ENCODE measurements at regions of chr5 and their contacts with region 1.

Region 1: DNA sequence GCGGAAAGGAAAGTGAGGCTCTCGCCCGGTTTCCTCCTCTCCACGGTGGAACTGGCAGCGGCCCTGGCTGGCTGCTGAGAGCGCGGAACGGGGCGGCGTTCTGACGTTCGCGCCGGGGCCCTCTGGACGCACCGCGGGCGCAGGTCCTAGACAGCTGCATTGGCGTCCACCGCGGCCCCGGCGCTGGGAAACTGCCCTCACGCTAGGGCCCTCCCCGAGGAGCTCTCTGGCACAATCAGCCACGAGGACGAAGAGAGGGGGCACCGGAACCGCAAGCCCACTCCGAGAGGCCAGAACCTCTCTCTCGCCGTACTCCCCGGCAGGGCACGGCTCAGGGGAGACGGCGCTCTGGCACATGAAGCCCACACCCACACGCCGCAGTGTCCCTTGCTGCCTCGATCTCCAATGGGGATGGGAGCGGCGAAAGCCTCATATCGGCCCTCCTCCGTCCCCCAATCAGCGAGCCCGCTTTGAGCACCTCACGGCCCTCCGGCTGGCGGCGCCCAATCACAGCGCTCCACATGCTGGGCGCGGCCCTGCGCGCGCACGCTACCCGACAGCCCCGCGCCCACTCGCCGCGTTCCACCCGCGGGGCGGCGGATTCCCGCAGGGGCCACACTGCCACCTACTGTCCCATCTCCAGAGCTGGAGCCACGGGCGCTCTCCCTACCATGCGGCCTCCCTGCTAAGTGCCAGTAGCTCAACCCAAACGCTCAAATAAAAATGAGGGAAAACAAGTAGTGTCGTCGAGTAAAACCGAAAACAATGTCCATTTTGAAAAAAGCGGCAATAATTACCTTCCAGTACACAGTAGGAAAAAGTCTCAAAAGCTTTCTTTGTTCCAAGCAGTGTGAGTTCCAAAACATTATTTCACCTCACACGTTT is 11.8 kb downstream of the MRPS27 start:
- DNase-seq: peak; percentile 96
- ATAC-seq: peak; percentile 98
- H3K4me3 Mint-ChIP-seq: peak overlapping the region; percentile 88
- H3K27ac Mint-ChIP-seq: peak overlapping the region; percentile 91
- H3K4me1 Mint-ChIP-seq: peaks cover 32% of the 10 kb centered on the region
- H3K27me3 Mint-ChIP-seq: no peaks in the 10 kb centered on the region

Region 2: DNA sequence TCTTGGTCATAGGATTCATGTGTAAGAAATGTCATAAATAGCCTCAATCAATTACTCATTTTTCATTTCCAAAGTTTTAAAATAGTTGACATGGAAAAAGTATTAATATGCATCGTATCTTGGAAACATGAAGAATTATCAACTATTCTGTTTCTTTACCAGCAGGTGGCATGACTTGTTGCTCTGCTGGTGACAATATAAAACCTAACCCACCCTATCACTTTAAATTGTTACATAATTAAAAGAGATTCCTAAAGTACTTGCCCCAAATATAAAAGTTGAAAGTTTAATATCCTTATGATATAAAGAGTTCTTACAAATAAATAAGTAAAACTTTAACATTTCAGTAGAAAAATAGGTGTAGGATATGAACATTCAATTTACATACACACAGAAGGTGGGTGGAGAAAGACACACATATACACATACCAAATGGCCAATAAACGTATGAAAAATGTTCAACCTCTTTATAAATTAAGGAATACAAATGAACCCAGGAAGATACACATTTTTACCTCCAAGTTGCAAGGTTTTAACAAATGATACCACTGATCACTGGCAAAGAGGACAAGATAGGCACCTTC is 170.3 kb before region 1 on chr5:
- CTCF ChIA-PET with region 1: interaction called, 12 read pairs
- POLR2A ChIA-PET with region 1: no interaction called
- DNase-seq: no peak
- ATAC-seq: no peak
- H3K4me3 Mint-ChIP-seq: no peak overlapping the region
- H3K27ac Mint-ChIP-seq: no peak overlapping the region
- H3K4me1 Mint-ChIP-seq: peaks cover 14% of the 10 kb centered on the region
- H3K27me3 Mint-ChIP-seq: peaks cover 49% of the 10 kb centered on the region

Region 3: DNA sequence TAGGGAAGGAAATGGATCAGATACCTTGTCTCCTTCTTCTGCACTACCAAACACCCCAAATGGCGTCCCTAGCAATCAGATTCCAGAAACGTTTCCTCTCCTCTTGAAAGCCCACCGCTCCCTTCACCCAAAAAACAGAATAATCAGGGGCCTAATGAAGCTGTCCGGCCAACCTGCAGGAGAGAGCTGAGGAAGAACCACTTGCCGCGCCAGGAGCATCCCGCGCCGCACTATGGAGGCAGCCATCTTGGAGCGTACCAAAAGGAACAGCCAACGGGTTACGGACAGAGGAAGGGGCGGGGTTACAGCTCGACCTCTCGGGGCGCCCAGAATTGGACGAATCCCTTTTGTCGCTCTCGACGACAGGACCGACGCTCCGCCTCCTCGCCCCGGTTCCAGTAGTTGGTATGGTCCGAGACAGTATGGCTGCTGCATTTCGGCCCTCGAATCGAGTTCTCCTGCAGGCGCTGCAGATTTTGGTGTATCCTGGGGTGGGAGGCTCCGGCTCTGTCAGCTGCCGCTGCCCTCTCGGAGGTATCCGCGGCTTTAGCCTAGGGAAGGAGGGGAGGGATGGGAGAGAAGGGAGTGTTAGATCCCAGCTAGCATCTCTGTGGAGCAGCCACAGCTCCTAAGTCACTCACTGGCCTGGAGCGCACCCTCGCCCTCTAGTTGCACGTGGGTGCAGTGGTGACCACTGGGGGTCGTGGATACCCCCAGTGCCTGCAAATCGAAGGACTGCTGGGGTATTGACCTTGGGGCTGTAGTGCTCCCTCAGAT is 12.0 kb after region 1 on chr5 and contains the starts of genes MRPS27 and PTCD2:
- CTCF ChIA-PET with region 1: interaction called, 39 read pairs
- POLR2A ChIA-PET with region 1: interaction called, 48 read pairs
- DNase-seq: peak; percentile 97
- ATAC-seq: peak; percentile 100
- H3K4me3 Mint-ChIP-seq: peak within 1 kb of the TSS; percentile 88
- H3K27ac Mint-ChIP-seq: peak within 1 kb of the TSS; percentile 90
- H3K4me1 Mint-ChIP-seq: peaks cover 43% of the 10 kb centered on the region
- H3K27me3 Mint-ChIP-seq: no peaks in the 10 kb centered on the region
- total RNA-seq, gene MRPS27: 48.2 to 53.9 TPM
- total RNA-seq, gene PTCD2: 8.4 to 9.5 TPM